Dendritic cell treated with granulocyte-macrophage colony-stimulating factor and Interleukin-4, amounts not matched to agents 40 ng/mL and 50 ng/mL, for 4 days (primary cell): ENCODE measurements at regions of chr7 and their contacts with region 1.

Region 1: DNA sequence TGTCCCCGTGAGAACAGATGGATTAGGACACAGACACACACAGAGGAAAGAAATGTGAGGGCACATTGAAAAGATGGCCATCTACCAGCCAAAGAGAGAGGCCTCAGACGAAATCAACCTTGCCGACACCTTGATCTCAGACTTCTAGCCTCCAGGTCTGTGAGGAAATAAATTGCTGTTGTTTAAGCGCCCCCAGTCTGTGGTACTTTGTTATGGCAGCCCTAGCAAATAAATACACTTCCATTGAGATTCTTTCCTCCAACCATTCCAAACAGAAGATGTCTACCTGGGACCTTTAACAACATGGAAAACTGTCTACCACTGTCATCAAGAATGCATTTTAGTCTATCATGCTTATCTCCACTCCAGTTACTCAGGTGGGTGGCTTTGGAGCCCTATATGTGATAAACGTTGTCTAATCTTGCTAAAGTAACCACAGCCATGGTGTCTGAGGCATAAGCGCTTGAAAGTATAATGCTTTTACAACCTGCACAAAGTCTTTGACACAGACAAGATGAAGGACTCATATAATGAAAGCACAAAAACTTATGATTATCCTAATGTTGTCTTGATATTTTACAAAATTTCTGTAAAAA is 244.3 kb downstream of the MTERF1 start:
- H3K4me3 Mint-ChIP-seq: no peak overlapping the region
- H3K27ac Mint-ChIP-seq: no peak overlapping the region
- H3K4me1 Mint-ChIP-seq: no peaks in the 10 kb centered on the region
- H3K27me3 Mint-ChIP-seq: peaks cover 3% of the 10 kb centered on the region

Region 2: GRCh38 chr7:91288208-91288824 is 347.9 kb before region 1 on chr7:
- intact Hi-C with region 1: loop called (anchors 2 kb)
- H3K4me3 Mint-ChIP-seq: no peak overlapping the region
- H3K27ac Mint-ChIP-seq: no peak overlapping the region
- H3K4me1 Mint-ChIP-seq: peaks cover 47% of the 10 kb centered on the region
- H3K27me3 Mint-ChIP-seq: no peaks in the 10 kb centered on the region

Region 3: DNA sequence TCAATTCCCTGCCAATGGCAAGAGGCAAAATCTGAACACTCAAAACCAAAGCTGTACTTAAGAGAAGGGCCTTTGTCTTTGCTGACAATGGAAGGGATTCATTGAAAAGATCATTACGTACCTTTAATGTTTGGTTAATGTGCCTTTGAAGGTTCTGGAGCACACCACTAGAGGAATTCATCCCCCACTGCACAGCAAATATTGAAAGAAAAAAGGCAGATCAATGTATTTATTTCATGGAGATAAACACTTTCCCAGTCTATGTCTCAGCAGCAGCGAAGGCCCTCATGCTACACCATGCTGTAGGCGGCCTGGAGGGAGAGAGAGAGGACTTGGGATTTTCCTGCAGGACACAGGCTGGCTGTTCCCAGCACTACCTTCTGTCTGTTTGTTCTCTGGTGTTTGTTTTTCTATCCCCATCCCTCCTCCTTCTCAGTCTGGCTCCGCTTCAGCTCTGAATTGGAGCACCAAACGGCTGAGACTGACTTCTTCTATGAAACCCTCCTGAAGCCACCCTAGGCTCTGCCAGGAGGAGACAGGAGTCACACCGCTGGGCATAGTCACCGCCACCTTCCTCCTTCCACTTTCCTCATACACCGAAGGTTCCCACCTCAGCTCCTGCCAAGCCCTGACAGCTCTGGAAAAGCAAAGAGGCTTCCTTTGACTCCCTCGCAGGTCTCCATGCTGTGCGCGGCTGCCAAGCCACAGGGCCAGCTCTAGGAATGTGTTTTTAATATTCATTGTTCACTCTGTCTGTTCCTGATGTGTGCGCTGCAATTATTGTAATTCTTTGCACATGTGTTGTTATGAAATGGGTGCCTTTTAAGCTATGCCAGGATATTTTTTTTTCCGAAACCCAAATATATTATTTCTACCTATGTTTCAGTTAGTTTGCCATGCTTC is 70.5 kb before region 1 on chr7:
- intact Hi-C with region 1: no loop called
- H3K4me3 Mint-ChIP-seq: no peak overlapping the region
- H3K27ac Mint-ChIP-seq: no peak overlapping the region
- H3K4me1 Mint-ChIP-seq: peaks cover 7% of the 10 kb centered on the region
- H3K27me3 Mint-ChIP-seq: peaks cover 3% of the 10 kb centered on the region